CD4-positive, alpha-beta T cell (primary cell): ENCODE measurements at regions of chr2 and their contacts with region 1.

Region 1: DNA sequence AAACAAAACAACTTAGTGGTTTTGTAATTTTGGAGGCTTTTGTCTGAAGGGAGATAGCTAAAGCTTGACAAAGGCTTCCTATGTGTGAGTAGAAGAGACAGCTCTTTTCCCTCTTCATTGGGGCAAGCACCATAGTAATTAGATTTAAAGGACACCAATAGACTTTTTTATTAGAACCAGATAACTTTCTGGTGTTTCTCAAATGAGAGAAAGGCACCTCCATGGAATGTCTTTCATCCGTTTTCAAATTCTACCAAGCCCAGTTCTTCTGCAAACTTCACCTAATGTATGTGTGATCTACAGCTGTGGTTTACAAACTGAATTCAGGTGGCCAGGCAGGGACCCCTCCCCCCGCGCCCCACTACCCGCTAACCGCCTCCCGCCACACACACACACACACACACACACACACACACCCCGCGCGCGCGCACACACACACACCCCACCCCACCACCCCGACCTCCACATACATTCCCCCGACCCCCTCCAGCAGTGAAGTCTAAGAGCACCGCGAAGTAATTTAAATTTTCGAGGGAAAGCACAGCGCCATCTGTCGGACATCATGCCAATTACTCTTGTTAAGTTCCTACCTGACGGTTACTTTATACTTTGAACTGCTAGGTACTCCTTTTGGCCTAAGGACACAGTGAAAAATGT is 31.6 kb upstream of the PPP1R1C start:
- DNase-seq: peak; percentile 26 to 80 (median 48)
- ATAC-seq: peak; percentile 77
- H3K4me3 ChIP-seq: peak overlapping the region; percentile 5
- H3K4me3 Mint-ChIP-seq: peak overlapping the region; percentile 44
- H3K27ac ChIP-seq: no peak overlapping the region
- H3K27ac Mint-ChIP-seq: no peak overlapping the region
- H3K4me1 ChIP-seq: peaks cover 5% of the 10 kb centered on the region
- H3K4me1 Mint-ChIP-seq: peaks cover 14% of the 10 kb centered on the region
- H3K27me3 ChIP-seq: no peaks in the 10 kb centered on the region
- H3K27me3 Mint-ChIP-seq: peaks cover 14% of the 10 kb centered on the region
- CTCF ChIP-seq: peak; percentile 47

Region 2: DNA sequence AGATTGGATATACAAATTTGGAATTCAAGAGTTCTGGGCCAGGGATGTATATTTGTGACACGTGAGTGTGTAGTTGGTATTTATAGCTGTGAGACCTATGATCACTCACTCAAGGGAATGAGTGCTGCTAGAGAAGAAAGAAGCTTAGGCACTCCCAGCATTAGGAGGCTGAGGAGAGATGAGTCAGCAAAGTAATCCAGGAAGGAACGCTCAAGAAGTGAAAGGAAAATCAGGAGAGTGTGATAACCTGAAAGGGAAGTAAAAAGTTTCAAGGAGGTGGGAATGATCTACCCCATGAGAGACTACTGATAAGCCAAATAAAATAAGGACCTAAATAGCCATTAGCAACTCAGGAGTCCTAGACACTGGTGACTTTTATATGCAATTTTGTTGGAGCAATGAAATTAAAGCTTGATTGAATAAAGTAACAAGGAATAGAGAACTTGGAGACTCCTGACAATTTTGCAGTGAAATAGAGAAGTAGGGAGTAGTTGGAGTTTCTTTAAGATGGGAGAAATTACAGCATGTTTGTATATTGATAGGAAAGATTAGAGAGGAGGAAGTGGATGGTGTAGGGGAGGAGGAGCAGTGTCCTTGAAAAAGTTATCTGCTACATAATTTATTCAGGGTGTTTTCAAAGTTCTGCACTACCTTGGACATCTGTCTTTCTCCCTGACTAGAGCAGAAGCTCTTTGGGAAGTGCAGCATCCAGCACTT is 883.7 kb before region 1 on chr2:
- CTCF ChIA-PET with region 1: no interaction called
- POLR2A ChIA-PET with region 1: no interaction called
- intact Hi-C with region 1: loop called in 1 of 2 experiments (anchors 5 kb)
- DNase-seq: no peak
- ATAC-seq: no peak
- H3K4me3 ChIP-seq: no peak overlapping the region
- H3K4me3 Mint-ChIP-seq: no peak overlapping the region
- H3K27ac ChIP-seq: no peak overlapping the region
- H3K27ac Mint-ChIP-seq: no peak overlapping the region
- H3K4me1 ChIP-seq: no peaks in the 10 kb centered on the region
- H3K4me1 Mint-ChIP-seq: no peaks in the 10 kb centered on the region
- H3K27me3 ChIP-seq: no peaks in the 10 kb centered on the region
- H3K27me3 Mint-ChIP-seq: no peaks in the 10 kb centered on the region
- CTCF ChIP-seq: no peak